ENCODE measurements at regions of chr2 and their contacts with region 1.

Region 1: GRCh38 chr2:100610381-100610831 is 47.6 kb downstream of the PDCL3 start:
- DNase-seq: peak; percentile 58 to 69 (median 66)
- ATAC-seq: peak; percentile 93
- H3K4me3 ChIP-seq: no peak overlapping the region
- H3K27ac ChIP-seq: no peak overlapping the region
- H3K4me1 ChIP-seq: no peaks in the 10 kb centered on the region
- H3K27me3 ChIP-seq: peaks cover 18 to 64% of the 10 kb centered on the region in 2 experiments
- CTCF ChIP-seq: peak; percentile 61 to 77 (median 69); a peak in 5 of 6 replicates
- EP300 ChIP-seq: no peak
- POLR2A ChIP-seq: no peak
- RAD21 ChIP-seq: peak; percentile 71 to 86

Region 2: GRCh38 chr2:100427628-100428258 is 182.7 kb before region 1 on chr2:
- CTCF ChIA-PET with region 1: no interaction called
- POLR2A ChIA-PET with region 1: no interaction called
- in situ Hi-C with region 1: no loop called
- intact Hi-C with region 1: loop called (anchors 10 kb)
- DNase-seq: peak; percentile 39 to 71 (median 46)
- ATAC-seq: peak; percentile 90
- H3K4me3 ChIP-seq: no peak overlapping the region
- H3K27ac ChIP-seq: no peak overlapping the region
- H3K4me1 ChIP-seq: peaks cover 0 to 5% of the 10 kb centered on the region in 2 experiments; a peak in 2 of 5 replicates
- H3K27me3 ChIP-seq: peaks cover 0 to 2% of the 10 kb centered on the region in 2 experiments; a peak in 2 of 5 replicates
- CTCF ChIP-seq: peak; percentile 48 to 59 (median 58); a peak in 5 of 6 replicates
- EP300 ChIP-seq: no peak
- POLR2A ChIP-seq: no peak
- RAD21 ChIP-seq: peak in 1 of 2 experiments; percentile 40; a peak in 2 of 4 replicates

Region 3: DNA sequence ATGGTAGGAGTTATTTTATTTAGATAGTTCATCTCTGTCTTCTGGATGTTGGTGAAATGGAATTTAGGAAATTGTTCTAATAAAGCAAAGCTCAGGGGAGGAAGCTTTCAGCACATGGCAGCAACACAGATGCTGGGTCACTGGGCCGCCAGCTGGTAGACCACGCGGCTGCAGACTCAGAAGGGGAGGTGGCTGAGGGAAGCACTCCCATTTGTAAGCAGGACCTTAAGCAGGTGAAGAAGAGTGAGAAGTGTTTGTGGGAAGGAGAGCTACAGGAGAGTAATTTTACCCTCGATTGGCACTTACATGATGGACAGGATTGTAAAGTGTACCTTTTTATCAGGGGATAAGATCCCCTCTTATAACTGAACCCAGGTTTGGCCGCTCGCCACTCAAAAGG is 115.7 kb before region 1 on chr2:
- CTCF ChIA-PET with region 1: no interaction called
- POLR2A ChIA-PET with region 1: no interaction called
- in situ Hi-C with region 1: no loop called
- intact Hi-C with region 1: loop called (anchors 10 kb)
- DNase-seq: no peak
- ATAC-seq: no peak
- H3K4me3 ChIP-seq: no peak overlapping the region
- H3K27ac ChIP-seq: no peak overlapping the region
- H3K4me1 ChIP-seq: no peaks in the 10 kb centered on the region
- H3K27me3 ChIP-seq: peaks cover 0 to 36% of the 10 kb centered on the region in 2 experiments; a peak in 4 of 5 replicates
- CTCF ChIP-seq: no peak
- EP300 ChIP-seq: no peak
- POLR2A ChIP-seq: no peak
- RAD21 ChIP-seq: no peak

Region 4: DNA sequence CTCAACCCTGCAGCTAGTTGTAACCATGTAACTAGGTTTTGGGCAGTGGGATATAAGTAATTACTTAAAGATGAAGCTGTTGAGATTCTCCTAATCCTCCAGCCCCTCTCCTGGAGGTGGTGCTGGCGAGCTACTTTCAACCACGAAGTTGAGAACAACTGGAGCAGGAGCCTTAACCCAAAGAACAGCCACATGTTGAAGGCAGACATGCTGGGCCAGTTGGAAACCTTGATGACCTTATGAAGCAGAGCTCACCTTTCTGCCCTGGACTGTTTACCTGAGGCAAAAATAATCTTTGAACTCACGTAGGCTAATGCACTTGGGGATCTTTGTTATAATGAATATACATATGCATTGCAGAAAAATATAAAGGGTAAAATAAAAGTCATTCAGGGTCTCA is 119.9 kb after region 1 on chr2:
- CTCF ChIA-PET with region 1: no interaction called
- POLR2A ChIA-PET with region 1: no interaction called
- in situ Hi-C with region 1: no loop called
- intact Hi-C with region 1: loop called (anchors 10 kb)
- DNase-seq: peak in 3 of 4 experiments; percentile 13 to 46 (median 23)
- ATAC-seq: peak; percentile 64
- H3K4me3 ChIP-seq: no peak overlapping the region
- H3K27ac ChIP-seq: no peak overlapping the region
- H3K4me1 ChIP-seq: no peaks in the 10 kb centered on the region
- H3K27me3 ChIP-seq: peaks cover 0 to 16% of the 10 kb centered on the region in 2 experiments; a peak in 4 of 5 replicates
- CTCF ChIP-seq: peak; percentile 54 to 62 (median 56)
- EP300 ChIP-seq: no peak
- POLR2A ChIP-seq: no peak
- RAD21 ChIP-seq: peak; percentile 43 to 69

Region 5: DNA sequence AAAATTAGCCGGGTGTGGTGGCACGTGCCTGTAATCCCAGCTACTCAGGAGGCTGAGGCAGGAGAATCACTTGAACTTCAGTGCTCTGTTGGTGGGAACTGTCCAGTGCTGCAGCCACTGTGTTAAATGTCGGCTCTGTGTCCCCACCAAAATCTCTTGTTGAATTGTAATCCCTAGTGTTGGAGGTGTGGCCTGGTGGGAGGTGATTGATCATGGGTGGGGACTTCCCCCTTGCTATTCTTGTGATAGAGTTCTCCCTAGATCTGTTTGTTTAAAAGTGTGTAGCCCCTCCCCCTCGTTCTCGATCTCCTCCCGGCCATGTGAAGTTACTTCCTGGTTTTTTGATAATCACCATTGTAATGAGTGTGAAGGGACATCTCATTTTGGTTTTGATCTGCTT is 381.9 kb after region 1 on chr2:
- CTCF ChIA-PET with region 1: interaction called, 3 read pairs
- POLR2A ChIA-PET with region 1: no interaction called
- in situ Hi-C with region 1: loop called (anchors 10 kb)
- intact Hi-C with region 1: no loop called
- DNase-seq: no peak
- ATAC-seq: peak; percentile 30; the same call in 2 of the 3 replicates
- H3K4me3 ChIP-seq: no peak overlapping the region
- H3K27ac ChIP-seq: no peak overlapping the region
- H3K4me1 ChIP-seq: peaks cover 0 to 7% of the 10 kb centered on the region in 2 experiments; a peak in 2 of 5 replicates
- H3K27me3 ChIP-seq: peaks cover 25 to 59% of the 10 kb centered on the region in 2 experiments; a peak in 4 of 5 replicates
- CTCF ChIP-seq: no peak
- EP300 ChIP-seq: no peak
- POLR2A ChIP-seq: no peak
- RAD21 ChIP-seq: no peak

Measured in K562 (cell line).